Stomach (tissue), 19 donors: ENCODE measurements at regions of chr9 and their contacts with region 1.

Region 1: GRCh38 chr9:136400038-136400834 is at the start of gene SNAPC4:
- DNase-seq: peak; percentile 89 to 97
- H3K4me3 ChIP-seq: peak within 1 kb of the TSS; percentile 71 to 98 (median 96)
- H3K27ac ChIP-seq: peak within 1 kb of the TSS in 4 of 5 donors; percentile 55 to 81 (median 68)
- H3K4me1 ChIP-seq: peaks cover 12 to 31% (median 26%) of the 10 kb centered on the region in 4 donors
- H3K27me3 ChIP-seq: no peaks in the 10 kb centered on the region
- CTCF ChIP-seq: peak in 5 of 7 experiments; percentile 60 to 96 (median 94)
- EP300 ChIP-seq: no peak
- POLR2A ChIP-seq: no peak
- total RNA-seq, gene SNAPC4: 1.8 to 58.2 (median 5.8) TPM

Region 2: GRCh38 chr9:135300346-135301141 is 1099.7 kb before region 1 on chr9:
- intact Hi-C with region 1: no loop called
- DNase-seq: no peak
- H3K4me3 ChIP-seq: no peak overlapping the region
- H3K27ac ChIP-seq: no peak overlapping the region
- H3K4me1 ChIP-seq: peaks cover 0 to 9% (median 3%) of the 10 kb centered on the region in 4 donors
- H3K27me3 ChIP-seq: peaks cover 0 to 72% (median 20%) of the 10 kb centered on the region in 3 donors
- CTCF ChIP-seq: no peak
- EP300 ChIP-seq: no peak
- POLR2A ChIP-seq: no peak

Region 3: GRCh38 chr9:136138566-136138965 is 261.7 kb before region 1 on chr9:
- intact Hi-C with region 1: no loop called
- DNase-seq: peak in 1 of 2 donors; percentile 60
- H3K4me3 ChIP-seq: no peak overlapping the region
- H3K27ac ChIP-seq: no peak overlapping the region
- H3K4me1 ChIP-seq: peaks cover 4 to 5% (median 5%) of the 10 kb centered on the region in 4 donors
- H3K27me3 ChIP-seq: peaks cover 0 to 76% (median 49%) of the 10 kb centered on the region in 3 donors
- CTCF ChIP-seq: no peak
- EP300 ChIP-seq: no peak
- POLR2A ChIP-seq: no peak

Region 4: DNA sequence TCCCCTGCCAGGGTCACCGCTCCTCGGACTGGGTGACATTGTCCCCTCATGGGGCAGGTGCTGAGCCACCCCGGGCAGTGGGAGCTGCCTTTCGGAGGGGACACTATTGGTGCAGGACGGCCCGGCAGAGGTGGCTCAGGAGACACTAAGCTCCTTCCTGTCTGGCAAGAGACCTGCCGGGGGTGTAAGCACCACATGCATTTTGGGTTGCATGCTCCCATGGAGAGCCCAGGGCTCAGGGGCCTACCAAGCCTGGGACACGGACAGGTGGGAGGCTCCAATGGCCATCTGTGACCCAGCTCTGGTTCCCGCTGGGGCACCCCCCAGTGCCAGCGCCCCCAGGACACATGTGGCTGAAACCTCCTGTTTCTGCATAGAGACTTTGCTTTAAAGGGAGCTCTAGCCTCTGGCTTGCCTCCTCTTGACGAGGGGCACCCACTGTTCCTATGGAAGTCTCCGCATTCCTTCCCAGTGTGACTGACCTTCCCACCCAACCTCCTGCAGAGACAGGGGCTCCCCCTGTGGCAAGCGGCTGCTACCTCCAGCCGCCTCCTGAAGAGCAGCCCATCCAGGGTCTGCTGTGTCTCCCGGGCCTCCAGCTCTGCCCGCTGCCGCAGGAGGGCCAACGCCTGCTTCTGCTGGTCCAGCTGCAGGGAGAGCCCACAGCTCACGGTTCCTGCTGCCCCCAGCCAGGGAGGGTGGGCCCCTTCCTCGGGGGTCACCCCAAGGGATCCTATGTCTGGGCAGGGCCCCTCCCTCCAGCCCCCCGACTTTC is 124.4 kb before region 1 on chr9:
- intact Hi-C with region 1: no loop called
- DNase-seq: no peak
- H3K4me3 ChIP-seq: no peak overlapping the region
- H3K27ac ChIP-seq: no peak overlapping the region
- H3K4me1 ChIP-seq: no peaks in the 10 kb centered on the region
- H3K27me3 ChIP-seq: peaks cover 0 to 54% (median 15%) of the 10 kb centered on the region in 3 donors
- CTCF ChIP-seq: no peak
- EP300 ChIP-seq: no peak
- POLR2A ChIP-seq: no peak

Region 5: DNA sequence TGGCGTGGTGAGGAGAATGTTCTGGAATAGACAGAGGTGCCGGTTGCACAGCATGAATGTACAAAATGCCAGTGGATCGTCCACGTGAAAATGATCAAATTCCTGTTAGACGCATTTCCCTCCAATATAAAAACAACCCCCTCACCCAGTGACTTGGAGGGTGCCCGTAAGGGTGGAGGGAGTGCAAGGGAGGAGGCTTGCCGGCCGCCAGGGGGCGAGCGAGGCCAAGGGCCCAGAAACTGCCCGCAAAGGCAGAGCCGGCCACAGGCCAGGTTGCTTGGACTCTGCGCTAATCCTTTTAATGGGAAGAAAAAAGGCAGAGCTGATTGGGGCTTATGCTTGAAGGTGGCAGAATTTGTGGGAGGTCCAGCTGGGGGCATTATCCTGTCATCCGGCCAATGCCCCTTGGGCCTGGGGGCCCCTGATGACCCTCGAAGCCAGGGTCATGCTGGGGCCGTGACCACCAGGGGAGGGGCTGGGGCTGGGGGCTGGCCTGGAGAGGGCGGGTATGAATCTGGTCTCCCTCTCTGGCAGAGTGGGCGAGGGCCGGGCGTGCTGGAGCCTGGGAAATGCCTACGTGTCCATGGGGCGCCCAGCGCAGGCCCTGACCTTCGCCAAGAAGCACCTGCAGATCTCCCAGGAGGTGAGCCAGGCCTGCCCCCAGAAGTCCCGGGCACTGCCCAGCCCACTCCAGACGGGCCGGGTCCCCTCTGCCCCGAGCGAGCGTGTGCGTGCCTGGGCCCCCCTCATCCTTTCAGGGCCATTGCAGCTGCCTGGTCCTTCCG is 60.9 kb before region 1 on chr9:
- intact Hi-C with region 1: loop called (anchors 10 kb)
- DNase-seq: peak; percentile 85 to 90
- H3K4me3 ChIP-seq: no peak overlapping the region
- H3K27ac ChIP-seq: no peak overlapping the region
- H3K4me1 ChIP-seq: peaks cover 22 to 38% (median 32%) of the 10 kb centered on the region in 4 donors
- H3K27me3 ChIP-seq: no peaks in the 10 kb centered on the region
- CTCF ChIP-seq: peak in 6 of 7 experiments; percentile 19 to 92 (median 88)
- EP300 ChIP-seq: no peak
- POLR2A ChIP-seq: no peak